Mammary epithelial cell (primary cell): ENCODE measurements at regions of chr19 and their contacts with region 1.

Region 1: DNA sequence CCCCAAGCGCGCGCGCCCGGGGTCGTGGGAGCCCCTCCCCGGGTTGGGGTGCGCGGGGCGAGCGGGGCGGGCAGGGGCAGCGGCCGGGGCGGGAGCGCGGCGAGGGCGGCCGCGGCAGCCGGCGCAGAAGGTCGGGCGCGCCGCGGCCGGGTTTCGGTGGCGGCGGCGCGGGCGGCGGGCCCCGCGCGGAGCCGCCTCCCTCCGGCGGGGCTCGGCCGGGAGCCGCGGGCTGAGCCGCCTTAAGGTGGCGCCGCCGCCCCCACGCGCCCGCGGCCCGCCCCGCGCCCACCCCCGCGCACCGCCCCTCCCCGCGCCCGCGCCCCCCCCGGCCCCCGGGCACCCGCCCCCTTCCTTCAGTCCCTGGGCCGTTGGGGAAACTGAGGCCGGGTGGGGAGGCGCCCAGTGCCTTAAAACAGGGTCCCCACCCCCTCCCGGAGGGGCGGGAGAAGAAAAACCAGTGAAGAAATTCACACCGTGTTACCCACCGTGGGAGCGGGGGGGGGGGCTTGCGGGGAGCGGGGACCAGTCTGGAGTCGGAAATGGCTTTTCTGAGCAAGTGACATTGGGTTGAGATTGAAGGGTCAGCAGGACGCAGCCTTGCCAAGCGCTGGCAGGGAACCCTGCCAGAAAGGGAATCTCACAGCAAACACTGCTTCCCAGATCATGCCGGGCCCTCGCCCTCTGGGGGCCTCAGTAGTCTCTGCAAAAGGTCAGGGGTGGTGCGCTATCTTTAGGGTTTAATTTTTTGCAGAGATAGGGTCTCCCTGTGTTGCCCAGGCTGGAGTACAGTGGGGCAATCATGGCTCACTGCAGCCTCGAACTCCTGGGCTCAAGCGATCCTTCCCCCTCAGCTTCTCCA is at the start of gene TLE2:
- DNase-seq: no peak
- H3K4me3 ChIP-seq: peak within 1 kb of the TSS; percentile 38 to 49 (median 41)
- H3K27ac ChIP-seq: no peak within 1 kb of the TSS
- H3K4me1 ChIP-seq: peaks cover 1% of the 10 kb centered on the region
- H3K27me3 ChIP-seq: peaks cover 4% of the 10 kb centered on the region
- CTCF ChIP-seq: no peak
- total RNA-seq, gene TLE2: 4.8 to 7.2 TPM

Region 2: GRCh38 chr19:2785244-2785997 is 243.9 kb before region 1 on chr19 and contains the start of gene THOP1:
- CTCF ChIA-PET with region 1: no interaction called
- dilution Hi-C with region 1: no loop called
- in situ Hi-C with region 1: no loop called
- intact Hi-C with region 1: no loop called
- DNase-seq: peak; percentile 99
- H3K4me3 ChIP-seq: peak within 1 kb of the TSS; percentile 70 to 99 (median 91)
- H3K27ac ChIP-seq: peak within 1 kb of the TSS; percentile 70
- H3K4me1 ChIP-seq: peaks cover 14% of the 10 kb centered on the region
- H3K27me3 ChIP-seq: no peaks in the 10 kb centered on the region
- CTCF ChIP-seq: no peak
- total RNA-seq, gene THOP1: 63.7 to 100.0 TPM

Region 3: DNA sequence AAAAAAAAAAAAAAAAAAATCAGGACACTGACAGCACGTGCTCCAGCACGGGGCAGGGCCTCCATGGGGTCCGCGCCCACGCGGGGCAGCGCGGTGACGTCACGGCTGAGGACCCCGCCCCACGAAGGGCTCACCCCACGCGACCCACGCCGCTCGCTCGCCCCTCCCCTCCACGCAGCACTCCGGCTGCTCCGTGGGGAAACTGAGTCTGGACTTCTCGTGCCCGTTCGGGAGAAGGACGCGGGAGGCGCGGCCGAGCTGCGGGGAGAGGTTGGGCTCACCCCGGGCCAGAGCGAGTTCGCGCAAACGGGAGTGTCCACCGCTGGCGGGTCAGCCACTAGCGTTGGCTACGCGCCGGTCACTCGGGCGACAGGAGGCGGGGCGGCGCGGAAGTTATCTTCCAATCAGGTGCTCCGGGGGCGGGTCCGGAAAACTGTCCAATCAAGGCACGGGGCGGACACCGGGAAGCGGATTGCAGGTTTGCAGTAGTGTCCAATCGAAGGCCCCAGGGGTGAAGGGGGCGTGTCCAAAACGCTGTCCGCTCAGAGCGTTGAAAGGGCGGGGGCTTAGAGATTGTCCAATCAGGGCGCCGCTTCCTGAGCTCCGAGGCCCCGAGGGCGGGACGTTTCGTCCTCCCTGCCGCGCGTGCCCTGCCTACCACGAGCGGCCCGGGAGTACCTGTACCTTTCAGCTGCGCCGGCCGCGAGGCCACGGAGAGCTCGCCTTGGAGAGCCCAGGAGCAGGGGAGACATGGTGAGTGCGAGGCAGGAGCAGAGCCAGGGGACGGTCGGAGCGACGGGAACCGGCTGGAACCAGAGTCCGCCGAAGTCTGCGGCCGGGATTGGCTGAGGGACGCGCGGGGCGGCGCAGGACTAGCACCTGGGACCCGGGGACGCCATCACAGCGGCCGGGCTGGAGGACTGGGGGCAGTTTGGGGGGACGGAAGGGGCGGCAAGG is 128.7 kb before region 1 on chr19 and contains the start of gene ZNF57:
- CTCF ChIA-PET with region 1: no interaction called
- dilution Hi-C with region 1: loop called (anchors 5 kb)
- in situ Hi-C with region 1: no loop called
- intact Hi-C with region 1: no loop called
- DNase-seq: peak; percentile 99
- H3K4me3 ChIP-seq: peak within 1 kb of the TSS; percentile 87 to 99 (median 92)
- H3K27ac ChIP-seq: peak within 1 kb of the TSS; percentile 70
- H3K4me1 ChIP-seq: peaks cover 15% of the 10 kb centered on the region
- H3K27me3 ChIP-seq: no peaks in the 10 kb centered on the region
- CTCF ChIP-seq: no peak
- total RNA-seq, gene ZNF57: 7.7 to 12.0 TPM

Region 4: GRCh38 chr19:2977001-2977685 is 52.2 kb before region 1 on chr19 and contains the start of gene TLE6:
- CTCF ChIA-PET with region 1: no interaction called
- dilution Hi-C with region 1: loop called (anchors 10 kb)
- in situ Hi-C with region 1: no loop called
- intact Hi-C with region 1: loop called (anchors 5 kb)
- DNase-seq: peak; percentile 94
- H3K4me3 ChIP-seq: peak within 1 kb of the TSS; percentile 61 to 80 (median 62)
- H3K27ac ChIP-seq: no peak within 1 kb of the TSS
- H3K4me1 ChIP-seq: peaks cover 11% of the 10 kb centered on the region
- H3K27me3 ChIP-seq: no peaks in the 10 kb centered on the region
- CTCF ChIP-seq: no peak
- total RNA-seq, gene TLE6: 0.33 to 1.6 TPM

Region 5: GRCh38 chr19:2983351-2984195 is 45.7 kb before region 1 on chr19:
- CTCF ChIA-PET with region 1: no interaction called
- dilution Hi-C with region 1: loop called (anchors 10 kb)
- in situ Hi-C with region 1: no loop called
- intact Hi-C with region 1: loop called (anchors 5 kb)
- DNase-seq: peak; percentile 76
- H3K4me3 ChIP-seq: peak overlapping the region in 2 of 3 experiments; percentile 8 to 43
- H3K27ac ChIP-seq: no peak overlapping the region
- H3K4me1 ChIP-seq: peaks cover 17% of the 10 kb centered on the region
- H3K27me3 ChIP-seq: no peaks in the 10 kb centered on the region
- CTCF ChIP-seq: no peak

Region 6: GRCh38 chr19:3100081-3100864 is 71.0 kb after region 1 on chr19:
- CTCF ChIA-PET with region 1: no interaction called
- dilution Hi-C with region 1: loop called (anchors 5 kb)
- in situ Hi-C with region 1: no loop called
- intact Hi-C with region 1: no loop called
- DNase-seq: no peak
- H3K4me3 ChIP-seq: no peak overlapping the region
- H3K27ac ChIP-seq: no peak overlapping the region
- H3K4me1 ChIP-seq: peaks cover 39% of the 10 kb centered on the region
- H3K27me3 ChIP-seq: no peaks in the 10 kb centered on the region
- CTCF ChIP-seq: no peak

Region 7: DNA sequence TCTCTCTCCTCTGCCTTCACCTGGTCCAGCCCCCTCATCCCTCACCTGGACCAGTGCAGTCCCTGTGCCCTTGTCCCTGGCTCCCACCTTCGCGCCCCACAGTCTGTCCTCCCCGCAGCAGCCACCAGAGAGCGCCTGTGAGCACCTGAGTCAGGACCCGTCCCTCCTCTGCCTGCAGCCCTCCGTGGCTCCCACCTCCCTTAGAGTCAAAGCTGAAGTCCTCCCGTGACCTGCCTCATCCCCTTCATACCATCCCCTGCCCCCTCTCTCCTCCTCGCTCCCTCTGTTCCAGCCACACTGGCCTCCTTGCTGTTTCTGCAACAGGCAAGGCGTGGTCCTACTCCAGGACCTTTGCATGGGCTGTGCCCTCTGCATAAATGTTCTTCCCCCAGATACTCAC is 205.5 kb after region 1 on chr19:
- CTCF ChIA-PET with region 1: no interaction called
- dilution Hi-C with region 1: loop called (anchors 10 kb)
- in situ Hi-C with region 1: no loop called
- intact Hi-C with region 1: no loop called
- DNase-seq: no peak
- H3K4me3 ChIP-seq: no peak overlapping the region
- H3K27ac ChIP-seq: no peak overlapping the region
- H3K4me1 ChIP-seq: no peaks in the 10 kb centered on the region
- H3K27me3 ChIP-seq: no peaks in the 10 kb centered on the region
- CTCF ChIP-seq: peak; percentile 28 to 36

Region 8: DNA sequence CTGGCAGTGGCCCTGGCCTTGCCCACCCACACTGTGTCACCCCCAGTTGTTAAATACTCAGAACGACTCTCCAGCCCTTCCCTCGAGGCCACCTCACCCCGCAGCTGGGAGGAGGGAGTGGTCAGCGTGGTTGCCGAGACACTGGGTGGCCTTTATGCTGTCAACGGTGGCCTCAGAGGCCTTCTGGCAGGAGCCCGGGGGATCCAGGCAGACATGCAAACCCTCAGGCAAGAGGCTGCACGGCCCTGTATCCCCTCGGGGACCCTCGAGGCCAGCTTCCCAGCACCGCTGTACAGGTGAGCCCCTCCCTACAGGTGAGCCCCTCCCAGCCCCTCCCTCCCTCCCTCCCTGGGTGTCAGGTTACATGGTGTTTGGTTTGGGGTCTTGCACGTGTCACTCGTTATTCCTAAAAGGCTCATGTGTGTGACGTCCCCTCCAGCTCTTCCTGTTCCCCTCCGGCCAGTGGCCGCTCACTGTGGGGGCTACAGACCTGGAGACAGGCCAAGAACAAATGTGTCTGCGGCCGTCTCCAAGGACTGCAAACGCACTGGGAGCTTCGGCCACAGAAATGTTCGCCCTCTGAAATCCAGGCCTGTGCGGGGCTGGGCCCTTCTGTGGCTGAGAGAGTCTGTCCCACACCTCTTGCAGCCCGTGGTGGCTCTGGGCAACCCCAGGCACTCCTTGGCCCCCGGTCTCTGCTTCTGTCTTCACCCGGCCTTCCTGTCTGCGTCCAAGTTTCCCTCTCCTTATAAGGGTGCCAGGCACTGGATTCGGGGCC is 509.9 kb after region 1 on chr19 and contains the start of gene TEKTIP1:
- CTCF ChIA-PET with region 1: no interaction called
- dilution Hi-C with region 1: loop called (anchors 10 kb)
- in situ Hi-C with region 1: no loop called
- intact Hi-C with region 1: no loop called
- DNase-seq: no peak
- H3K4me3 ChIP-seq: no peak within 1 kb of the TSS
- H3K27ac ChIP-seq: no peak within 1 kb of the TSS
- H3K4me1 ChIP-seq: peaks cover 7% of the 10 kb centered on the region
- H3K27me3 ChIP-seq: no peaks in the 10 kb centered on the region
- CTCF ChIP-seq: no peak
- total RNA-seq, gene TEKTIP1: 1.9 TPM in 1 of 2 donors, not detected in the other